OCI-LY7 (cell line): ENCODE measurements at regions of chr9 and their contacts with region 1.

Region 1: GRCh38 chr9:68507130-68507805 is 33.4 kb downstream of the TMEM252 start:
- DNase-seq: peak; percentile 26
- H3K4me3 ChIP-seq: no peak overlapping the region
- H3K27ac ChIP-seq: no peak overlapping the region
- H3K4me1 ChIP-seq: no peaks in the 10 kb centered on the region
- CTCF ChIP-seq: peak; percentile 81

Region 2: GRCh38 chr9:68416936-68417564 is 90.2 kb before region 1 on chr9:
- CTCF ChIA-PET with region 1: no interaction called
- POLR2A ChIA-PET with region 1: interaction called, 3 read pairs
- intact Hi-C with region 1: loop called (anchors 5 kb)
- DNase-seq: peak; percentile 46
- H3K4me3 ChIP-seq: no peak overlapping the region
- H3K27ac ChIP-seq: no peak overlapping the region
- H3K4me1 ChIP-seq: no peaks in the 10 kb centered on the region
- CTCF ChIP-seq: peak; percentile 72

Region 3: DNA sequence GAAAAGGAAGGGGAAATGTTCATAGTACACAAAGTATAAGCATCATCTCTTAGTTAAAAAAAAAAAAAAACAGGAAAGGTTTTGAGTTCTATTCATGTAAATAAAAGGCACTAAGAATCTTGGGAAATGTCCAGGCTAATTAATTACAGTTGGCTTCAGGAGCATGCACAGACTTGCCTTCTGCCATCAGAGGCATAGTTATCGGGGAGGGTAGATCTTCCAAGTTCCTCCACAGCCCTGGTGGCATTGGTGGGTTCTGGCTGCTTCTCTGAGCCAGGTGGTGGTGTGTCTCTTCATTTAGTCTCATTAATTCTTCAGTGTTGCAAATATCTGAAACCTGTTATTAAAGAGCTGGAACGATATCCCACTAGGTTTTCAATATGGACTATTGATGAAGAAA is 51.8 kb before region 1 on chr9:
- CTCF ChIA-PET with region 1: no interaction called
- POLR2A ChIA-PET with region 1: no interaction called
- intact Hi-C with region 1: loop called (anchors 10 kb)
- DNase-seq: no peak
- H3K4me3 ChIP-seq: no peak overlapping the region
- H3K27ac ChIP-seq: no peak overlapping the region
- H3K4me1 ChIP-seq: no peaks in the 10 kb centered on the region
- CTCF ChIP-seq: no peak